ENCODE measurements at regions of chr6 and their contacts with region 1.

Region 1: GRCh38 chr6:12605888-12606345 is 110.7 kb upstream of the PHACTR1 start:
- DNase-seq: peak; percentile 15
- H3K4me3 ChIP-seq: no peak overlapping the region
- H3K27ac ChIP-seq: no peak overlapping the region
- H3K4me1 ChIP-seq: peaks cover 18% of the 10 kb centered on the region
- H3K27me3 ChIP-seq: no peaks in the 10 kb centered on the region
- CTCF ChIP-seq: peak; percentile 78

Region 2: GRCh38 chr6:11654876-11655275 is 951.0 kb before region 1 on chr6:
- intact Hi-C with region 1: loop called (anchors 5 kb)
- DNase-seq: no peak
- H3K4me3 ChIP-seq: no peak overlapping the region
- H3K27ac ChIP-seq: no peak overlapping the region
- H3K4me1 ChIP-seq: peaks cover 52% of the 10 kb centered on the region
- H3K27me3 ChIP-seq: no peaks in the 10 kb centered on the region
- CTCF ChIP-seq: no peak

Region 3: DNA sequence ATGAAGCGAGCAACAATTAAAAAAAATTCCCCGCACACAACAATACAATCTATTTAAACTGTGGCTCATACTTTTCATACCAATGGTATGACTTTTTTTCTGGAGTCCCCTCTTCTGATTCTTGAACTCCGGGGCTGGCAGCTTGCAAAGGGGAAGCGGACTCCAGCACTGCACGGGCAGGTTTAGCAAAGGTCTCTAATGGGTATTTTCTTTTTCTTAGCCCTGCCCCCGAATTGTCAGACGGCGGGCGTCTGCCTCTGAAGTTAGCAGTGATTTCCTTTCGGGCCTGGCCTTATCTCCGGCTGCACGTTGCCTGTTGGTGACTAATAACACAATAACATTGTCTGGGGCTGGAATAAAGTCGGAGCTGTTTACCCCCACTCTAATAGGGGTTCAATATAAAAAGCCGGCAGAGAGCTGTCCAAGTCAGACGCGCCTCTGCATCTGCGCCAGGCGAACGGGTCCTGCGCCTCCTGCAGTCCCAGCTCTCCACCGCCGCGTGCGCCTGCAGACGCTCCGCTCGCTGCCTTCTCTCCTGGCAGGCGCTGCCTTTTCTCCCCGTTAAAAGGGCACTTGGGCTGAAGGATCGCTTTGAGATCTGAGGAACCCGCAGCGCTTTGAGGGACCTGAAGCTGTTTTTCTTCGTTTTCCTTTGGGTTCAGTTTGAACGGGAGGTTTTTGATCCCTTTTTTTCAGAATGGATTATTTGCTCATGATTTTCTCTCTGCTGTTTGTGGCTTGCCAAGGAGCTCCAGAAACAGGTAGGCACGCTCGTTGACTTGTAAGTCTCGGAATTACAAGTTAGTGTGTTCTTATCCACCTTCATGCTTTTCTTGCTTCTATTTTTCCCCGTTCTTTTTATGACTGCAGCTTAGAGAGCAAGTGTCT is 315.7 kb before region 1 on chr6 and contains the start of gene EDN1:
- intact Hi-C with region 1: loop called (anchors 5 kb)
- DNase-seq: peak; percentile 67
- H3K4me3 ChIP-seq: peak within 1 kb of the TSS; percentile 68
- H3K27ac ChIP-seq: peak within 1 kb of the TSS; percentile 66
- H3K4me1 ChIP-seq: peaks cover 27% of the 10 kb centered on the region
- H3K27me3 ChIP-seq: peaks cover 29% of the 10 kb centered on the region
- CTCF ChIP-seq: peak; percentile 70
- total RNA-seq, gene EDN1: 5.9 TPM

Region 4: GRCh38 chr6:12844290-12845223 is 238.6 kb after region 1 on chr6:
- intact Hi-C with region 1: no loop called
- DNase-seq: no peak
- H3K4me3 ChIP-seq: no peak overlapping the region
- H3K27ac ChIP-seq: no peak overlapping the region
- H3K4me1 ChIP-seq: no peaks in the 10 kb centered on the region
- H3K27me3 ChIP-seq: no peaks in the 10 kb centered on the region
- CTCF ChIP-seq: peak; percentile 60